A549 (cell line): ENCODE measurements at regions of chr10 and their contacts with region 1.

Region 1: DNA sequence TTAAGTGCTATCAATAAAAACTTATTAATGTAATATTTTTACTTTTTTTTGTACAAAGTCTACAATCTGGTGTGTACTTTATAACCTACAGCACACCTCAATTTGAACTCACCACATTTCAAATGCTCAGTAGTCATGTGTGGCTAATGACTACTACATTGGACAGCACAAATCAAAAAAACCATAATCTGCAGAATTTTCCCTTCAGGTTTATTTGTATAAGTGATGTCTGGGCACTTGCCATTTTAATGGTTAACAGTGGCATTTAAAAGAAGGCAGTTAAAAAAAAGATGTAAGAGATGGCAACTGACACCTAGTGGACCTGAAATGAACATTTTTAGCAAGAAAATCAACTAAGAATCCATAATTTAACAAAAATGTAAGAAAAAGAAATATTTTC is 124.6 kb upstream of the NRBF2 start:
- DNase-seq: no peak
- ATAC-seq: no peak
- H3K4me3 ChIP-seq: no peak overlapping the region
- H3K27ac ChIP-seq: no peak overlapping the region
- H3K4me1 ChIP-seq: no peaks in the 10 kb centered on the region
- CTCF ChIP-seq: no peak
- EP300 ChIP-seq: no peak
- POLR2A ChIP-seq: no peak
- RAD21 ChIP-seq: no peak

Region 2: GRCh38 chr10:61750929-61751471 is 1257.5 kb before region 1 on chr10:
- CTCF ChIA-PET with region 1: no interaction called
- POLR2A ChIA-PET with region 1: interaction called, 14 read pairs
- DNase-seq: peak; percentile 22 to 59
- ATAC-seq: peak; percentile 80 to 98
- H3K4me3 ChIP-seq: no peak overlapping the region
- H3K27ac ChIP-seq: no peak overlapping the region
- H3K4me1 ChIP-seq: peaks cover 14% of the 10 kb centered on the region
- CTCF ChIP-seq: peak; percentile 60
- EP300 ChIP-seq: no peak
- POLR2A ChIP-seq: no peak
- RAD21 ChIP-seq: peak; percentile 48 to 64; a peak in 3 of 5 replicates

Region 3: GRCh38 chr10:62996925-62997324 is 11.6 kb before region 1 on chr10:
- CTCF ChIA-PET with region 1: no interaction called
- POLR2A ChIA-PET with region 1: no interaction called
- DNase-seq: no peak
- ATAC-seq: no peak
- H3K4me3 ChIP-seq: no peak overlapping the region
- H3K27ac ChIP-seq: no peak overlapping the region
- H3K4me1 ChIP-seq: no peaks in the 10 kb centered on the region
- CTCF ChIP-seq: no peak
- EP300 ChIP-seq: no peak
- POLR2A ChIP-seq: no peak
- RAD21 ChIP-seq: no peak